ENCODE measurements at regions of chr19 and their contacts with region 1.

Region 1: DNA sequence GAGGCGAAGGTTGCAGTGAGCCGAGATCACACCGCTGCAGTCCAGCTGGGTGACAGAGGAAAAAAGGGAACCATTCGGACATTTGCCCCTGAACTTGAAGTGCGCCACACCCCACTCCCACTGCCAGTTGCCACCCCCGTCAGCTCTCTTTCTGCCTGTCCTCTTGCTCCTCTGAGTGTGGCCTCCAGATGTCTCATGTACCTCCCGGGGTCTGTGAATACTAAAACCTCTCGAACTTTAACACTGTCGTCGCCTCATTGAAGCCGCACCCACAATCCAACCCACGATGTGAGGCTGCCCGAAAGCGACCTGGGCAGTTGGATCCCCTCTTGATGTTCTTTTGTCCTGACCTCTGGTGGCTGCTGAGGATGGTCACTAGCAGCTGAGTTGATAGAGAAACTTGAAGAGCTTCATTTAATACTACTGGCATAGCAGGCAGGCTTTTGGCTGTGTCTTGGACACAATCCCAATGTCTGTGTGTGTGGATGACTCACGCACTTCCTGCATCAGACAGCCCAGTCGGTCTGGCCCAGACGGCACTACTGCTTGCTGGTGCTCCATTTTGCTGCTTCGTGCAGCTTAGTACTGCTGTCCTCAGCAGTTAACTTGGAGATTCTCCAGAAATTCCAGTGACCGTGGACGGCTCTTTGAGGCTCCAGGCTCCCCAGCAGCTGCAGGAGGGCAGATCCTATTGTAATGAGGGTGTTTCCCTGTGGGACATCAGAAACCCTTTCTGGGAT is 4.2 kb downstream of the FPR3 start:
- DNase-seq: peak; percentile 91

Region 2: DNA sequence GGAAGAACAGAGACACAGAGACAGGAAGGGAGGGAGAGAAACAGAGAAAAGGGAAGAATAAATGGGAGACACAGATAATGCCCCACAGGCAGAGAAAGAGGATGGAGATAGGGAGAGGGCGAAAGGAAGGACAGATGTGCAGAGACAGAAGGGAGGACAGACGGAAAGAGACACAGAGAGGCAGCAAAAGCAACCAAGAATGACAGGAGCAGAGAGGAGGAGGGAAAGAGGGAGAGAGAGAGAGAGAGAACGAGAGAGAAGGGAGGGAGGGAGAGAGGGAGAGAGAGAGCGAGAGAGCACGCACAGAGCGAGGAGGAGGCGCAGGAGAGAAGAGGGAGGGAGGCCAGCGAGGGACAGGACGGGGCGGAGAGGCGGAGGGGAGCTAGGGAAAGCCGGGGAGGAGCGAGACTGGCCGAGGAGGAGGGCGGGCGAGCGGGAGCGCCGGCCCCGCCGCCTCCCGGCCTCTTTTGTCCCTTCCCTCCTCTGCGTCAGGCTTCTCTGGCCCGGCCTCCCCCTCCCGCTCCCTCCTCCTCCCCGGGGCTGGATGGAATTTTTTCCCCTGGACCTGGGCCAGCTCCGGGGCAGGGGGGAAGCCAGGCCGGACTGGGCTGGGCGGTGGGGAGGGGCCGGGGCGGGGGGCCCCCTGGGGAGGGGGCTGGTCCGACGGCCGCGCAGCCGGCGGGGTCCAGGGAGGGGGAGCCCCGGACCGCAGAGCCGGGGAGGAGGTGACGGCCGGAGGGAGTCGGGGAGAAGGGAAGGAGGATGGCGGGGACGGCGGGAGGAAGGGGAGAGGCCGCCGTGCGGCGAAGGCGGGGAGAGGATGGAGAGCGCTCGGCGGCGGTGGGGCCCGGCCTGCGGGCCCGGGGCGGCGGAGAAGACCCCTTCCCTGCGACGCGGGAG is 110.3 kb before region 1 on chr19:
- intact Hi-C with region 1: loop called (anchors 2 kb)
- DNase-seq: peak; percentile 96

Region 3: DNA sequence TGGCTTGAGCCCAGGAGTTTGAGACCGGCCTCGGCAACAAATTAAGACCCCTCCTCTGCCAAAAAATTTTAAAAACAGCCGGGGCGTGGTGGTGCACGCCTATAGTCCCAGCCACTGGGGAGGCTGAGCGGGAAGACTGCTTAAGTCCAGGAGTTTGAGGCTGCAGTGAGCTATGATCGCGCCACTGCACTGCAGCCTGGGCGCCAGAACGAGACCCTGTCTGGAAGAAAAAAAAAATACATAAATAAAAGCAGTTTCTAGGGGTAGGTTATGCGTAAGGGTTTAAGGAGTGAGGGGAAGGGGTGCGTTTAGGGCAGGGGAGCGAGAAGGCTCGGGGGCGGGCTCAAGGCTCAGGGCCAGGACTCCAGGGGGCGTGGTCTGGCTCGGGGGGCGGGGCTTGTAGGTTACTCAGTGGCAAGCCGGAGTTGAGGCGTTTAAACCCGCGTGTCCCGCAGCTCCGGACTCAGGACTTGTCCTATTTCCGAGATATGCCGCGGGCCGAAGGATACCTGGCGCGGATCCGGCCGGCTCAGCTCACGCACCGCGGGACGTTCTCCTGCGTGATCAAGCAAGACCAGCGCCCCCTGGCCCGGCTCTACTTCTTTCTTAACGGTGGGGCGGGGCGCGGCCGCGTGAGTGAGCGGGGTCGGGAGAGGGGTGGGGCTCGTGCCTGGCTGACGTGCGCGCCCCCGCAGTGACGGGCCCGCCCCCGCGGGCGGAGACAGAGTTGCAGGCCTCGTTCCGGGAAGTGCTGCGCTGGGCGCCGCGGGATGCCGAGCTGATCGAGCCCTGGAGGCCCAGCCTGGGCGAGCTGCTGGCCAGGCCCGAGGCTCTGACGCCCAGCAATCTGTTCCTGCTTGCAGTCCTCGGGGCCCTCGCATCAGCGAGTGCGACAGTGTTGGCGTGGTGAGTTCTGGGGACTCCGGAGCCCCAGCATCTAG is 95.4 kb before region 1 on chr19:
- intact Hi-C with region 1: loop called (anchors 5 kb)
- DNase-seq: peak; percentile 99

Region 4: DNA sequence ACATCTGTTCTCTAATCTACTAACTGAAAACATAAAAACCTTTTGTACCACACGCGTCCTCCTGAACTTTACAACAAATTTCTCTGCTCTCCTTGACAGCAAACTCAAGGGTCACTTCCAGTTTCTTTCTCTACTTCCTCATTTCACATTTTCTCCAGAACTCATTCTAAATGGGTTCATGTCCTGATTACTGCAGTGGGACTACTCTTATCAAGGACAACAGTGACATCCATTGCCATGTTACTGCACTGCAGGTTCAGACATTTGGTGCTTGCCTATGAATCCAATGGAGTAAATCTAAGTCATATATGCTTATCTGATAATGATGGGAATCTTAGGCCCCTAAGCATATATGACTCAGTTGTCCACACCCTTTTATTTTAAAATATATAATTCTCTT is 31.1 kb after region 1 on chr19:
- intact Hi-C with region 1: no loop called
- DNase-seq: no peak

Region 5: GRCh38 chr19:52048555-52049501 is 249.6 kb after region 1 on chr19 and contains the start of gene ZNF432:
- intact Hi-C with region 1: no loop called
- DNase-seq: peak; percentile 97
- total RNA-seq, gene ZNF432: 9.6 TPM

Measured in cardiac septum (tissue), 1 donor.